HCT116 (cell line): ENCODE measurements at regions of chr11 and their contacts with region 1.

Region 1: GRCh38 chr11:60251485-60252212 is 8.7 kb upstream of the MS4A4E start:
- DNase-seq: peak; percentile 24
- ATAC-seq: peak; percentile 87
- H3K4me3 ChIP-seq: no peak overlapping the region
- H3K27ac ChIP-seq: no peak overlapping the region
- H3K4me1 ChIP-seq: no peaks in the 10 kb centered on the region
- H3K27me3 ChIP-seq: no peaks in the 10 kb centered on the region
- CTCF ChIP-seq: peak; percentile 39 to 60 (median 45); a peak in 5 of 6 replicates
- POLR2A ChIP-seq: no peak
- RAD21 ChIP-seq: peak; percentile 64

Region 2: DNA sequence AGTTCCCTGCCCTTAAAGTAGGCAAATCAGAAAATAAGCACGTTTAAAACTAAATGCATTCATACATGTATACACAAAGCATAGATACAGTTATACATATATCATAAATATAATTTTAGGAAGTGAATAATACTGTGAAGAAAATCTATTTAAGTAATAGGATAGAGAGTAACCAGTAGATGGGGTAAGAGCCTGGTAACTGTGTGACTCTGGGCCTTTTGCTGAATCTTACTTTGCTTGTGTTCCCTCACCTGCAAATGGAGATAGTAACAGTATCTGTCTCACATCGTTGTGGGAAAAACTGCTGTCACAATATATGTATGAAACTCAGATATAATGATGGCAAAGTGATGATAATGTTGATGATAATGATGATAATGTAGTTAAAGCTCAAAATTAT is 133.3 kb before region 1 on chr11:
- CTCF ChIA-PET with region 1: interaction called, 8 read pairs
- POLR2A ChIA-PET with region 1: no interaction called
- RAD21 ChIA-PET with region 1: no interaction called
- intact Hi-C with region 1: loop called (anchors 5 kb)
- DNase-seq: no peak
- ATAC-seq: 0 out of 2 replicates have a peak, but pooled peaks have one; percentile 40
- H3K4me3 ChIP-seq: no peak overlapping the region
- H3K27ac ChIP-seq: no peak overlapping the region
- H3K4me1 ChIP-seq: no peaks in the 10 kb centered on the region
- H3K27me3 ChIP-seq: no peaks in the 10 kb centered on the region
- CTCF ChIP-seq: peak in 1 of 3 experiments; percentile 27; a peak in 1 of 6 replicates
- POLR2A ChIP-seq: no peak
- RAD21 ChIP-seq: peak; percentile 36